Endothelial cell of umbilical vein (primary cell): ENCODE measurements at regions of chr11 and their contacts with region 1.

Region 1: GRCh38 chr11:11866203-11866602 is 24.4 kb downstream of the USP47 start:
- DNase-seq: peak; percentile 30
- H3K4me3 ChIP-seq: no peak overlapping the region
- H3K27ac ChIP-seq: no peak overlapping the region
- H3K4me1 ChIP-seq: peaks cover 1% of the 10 kb centered on the region
- H3K27me3 ChIP-seq: no peaks in the 10 kb centered on the region
- CTCF ChIP-seq: no peak
- POLR2A ChIP-seq: no peak

Region 2: DNA sequence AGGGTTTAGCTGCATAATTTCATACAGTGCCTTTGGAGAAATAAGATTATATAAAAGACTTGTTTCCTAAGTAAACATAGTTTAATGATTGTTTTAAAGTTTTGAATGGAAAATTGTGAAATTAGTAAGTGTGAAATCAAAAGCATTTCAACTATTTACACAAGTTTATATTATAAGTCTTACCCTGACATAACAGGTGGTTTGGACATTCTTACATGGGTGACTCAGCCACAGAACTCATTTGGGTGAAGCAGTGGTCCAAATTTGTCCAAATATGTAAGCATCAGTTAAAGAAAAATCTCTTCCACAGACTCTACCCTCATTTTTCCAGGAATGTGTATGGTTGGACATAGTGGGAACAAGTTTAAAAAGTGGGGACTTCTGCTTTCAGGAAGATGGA is 43.5 kb after region 1 on chr11:
- CTCF ChIA-PET with region 1: interaction called, 3 read pairs
- POLR2A ChIA-PET with region 1: no interaction called
- dilution Hi-C with region 1: no loop called
- intact Hi-C with region 1: loop called (anchors 5 kb)
- DNase-seq: no peak
- H3K4me3 ChIP-seq: no peak overlapping the region
- H3K27ac ChIP-seq: no peak overlapping the region
- H3K4me1 ChIP-seq: no peaks in the 10 kb centered on the region
- H3K27me3 ChIP-seq: no peaks in the 10 kb centered on the region
- CTCF ChIP-seq: no peak
- POLR2A ChIP-seq: no peak